Natural killer cell (primary cell): ENCODE measurements at regions of chr12 and their contacts with region 1.

Region 1: DNA sequence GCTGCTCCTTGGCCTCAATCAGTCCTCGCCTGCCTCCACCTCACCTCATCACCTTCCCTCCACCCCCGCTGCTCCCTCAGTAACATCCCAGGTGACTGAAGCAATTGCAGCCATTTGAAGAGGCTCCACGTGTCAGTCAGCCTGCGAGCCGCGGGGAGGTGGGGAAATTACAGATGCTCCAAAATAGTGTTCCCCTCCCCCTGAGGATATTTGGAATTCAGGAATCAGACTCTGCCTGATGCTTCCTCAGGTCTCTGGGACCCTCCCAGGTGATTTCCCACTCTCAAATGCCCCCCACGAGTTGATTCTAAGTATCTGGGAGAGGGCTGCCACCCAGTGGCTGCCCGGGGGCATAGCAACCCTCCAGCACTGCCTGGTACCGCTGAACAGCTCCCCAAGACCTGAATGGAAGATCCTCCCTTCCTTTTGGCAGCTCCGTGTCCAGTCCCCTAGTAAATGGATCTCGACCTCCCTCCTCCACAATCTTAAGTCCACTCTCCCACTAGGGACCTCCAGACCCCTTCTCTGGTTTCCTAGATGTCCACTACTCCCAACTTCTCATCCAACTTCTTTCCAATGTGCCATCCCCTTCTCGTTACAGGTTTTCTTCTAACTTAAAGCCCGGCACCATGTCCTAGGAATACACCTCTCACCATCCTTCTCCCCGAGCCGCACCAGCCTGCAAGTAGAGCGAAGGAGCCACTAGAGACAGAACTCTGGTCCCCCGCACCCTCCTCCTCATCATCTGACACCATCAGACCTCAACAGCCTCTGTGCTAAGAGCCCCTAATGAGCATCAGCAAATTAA is 1.4 kb upstream of the ASIC1 start:
- DNase-seq: peak in 1 of 2 donors; percentile 78
- ATAC-seq: peak; percentile 69 to 83 (median 74)
- H3K4me3 ChIP-seq: no peak overlapping the region
- H3K4me3 Mint-ChIP-seq: peak overlapping the region; percentile 51
- H3K27ac ChIP-seq: no peak overlapping the region
- H3K27ac Mint-ChIP-seq: no peak overlapping the region
- H3K4me1 ChIP-seq: peaks cover 15% of the 10 kb centered on the region
- H3K4me1 Mint-ChIP-seq: peaks cover 24% of the 10 kb centered on the region in 2 donors
- H3K27me3 ChIP-seq: peaks cover 24% of the 10 kb centered on the region
- H3K27me3 Mint-ChIP-seq: peaks cover 52 to 62% of the 10 kb centered on the region in 2 donors
- CTCF ChIP-seq: peak; percentile 77

Region 2: GRCh38 chr12:49866859-49867579 is 189.0 kb before region 1 on chr12:
- intact Hi-C with region 1: loop called (anchors 5 kb)
- DNase-seq: peak; percentile 73 to 84
- ATAC-seq: peak; percentile 81 to 97 (median 93)
- H3K4me3 ChIP-seq: no peak overlapping the region
- H3K4me3 Mint-ChIP-seq: no peak overlapping the region
- H3K27ac ChIP-seq: no peak overlapping the region
- H3K27ac Mint-ChIP-seq: no peak overlapping the region
- H3K4me1 ChIP-seq: no peaks in the 10 kb centered on the region
- H3K4me1 Mint-ChIP-seq: peaks cover 0 to 5% of the 10 kb centered on the region in 2 donors
- H3K27me3 ChIP-seq: no peaks in the 10 kb centered on the region
- H3K27me3 Mint-ChIP-seq: peaks cover 0 to 10% of the 10 kb centered on the region in 2 donors
- CTCF ChIP-seq: peak; percentile 91

Region 3: GRCh38 chr12:49967042-49967776 is 88.8 kb before region 1 on chr12:
- intact Hi-C with region 1: loop called (anchors 1 kb)
- DNase-seq: peak; percentile 90 to 94
- ATAC-seq: peak; percentile 87 to 90 (median 90)
- H3K4me3 ChIP-seq: peak overlapping the region; percentile 26
- H3K4me3 Mint-ChIP-seq: peak overlapping the region; percentile 83
- H3K27ac ChIP-seq: no peak overlapping the region
- H3K27ac Mint-ChIP-seq: peak overlapping the region in 1 of 2 donors; percentile 42
- H3K4me1 ChIP-seq: peaks cover 14% of the 10 kb centered on the region
- H3K4me1 Mint-ChIP-seq: peaks cover 0 to 5% of the 10 kb centered on the region in 2 donors
- H3K27me3 ChIP-seq: peaks cover 8% of the 10 kb centered on the region
- H3K27me3 Mint-ChIP-seq: peaks cover 32 to 34% of the 10 kb centered on the region in 2 donors
- CTCF ChIP-seq: peak; percentile 93

Region 4: GRCh38 chr12:50025187-50026059 is 30.6 kb before region 1 on chr12 and contains the start of gene RACGAP1:
- intact Hi-C with region 1: no loop called
- DNase-seq: peak; percentile 91 to 100
- ATAC-seq: peak; percentile 96
- H3K4me3 ChIP-seq: peak within 1 kb of the TSS; percentile 57
- H3K4me3 Mint-ChIP-seq: peak within 1 kb of the TSS; percentile 97
- H3K27ac ChIP-seq: peak within 1 kb of the TSS; percentile 34
- H3K27ac Mint-ChIP-seq: peak within 1 kb of the TSS; percentile 86 to 91
- H3K4me1 ChIP-seq: peaks cover 7% of the 10 kb centered on the region
- H3K4me1 Mint-ChIP-seq: peaks cover 11 to 19% of the 10 kb centered on the region in 2 donors
- H3K27me3 ChIP-seq: no peaks in the 10 kb centered on the region
- H3K27me3 Mint-ChIP-seq: no peaks in the 10 kb centered on the region
- CTCF ChIP-seq: no peak
- total RNA-seq, gene RACGAP1: 6.1 to 11.6 (median 8.7) TPM